Activated CD4-positive, alpha-beta T cell treated with anti-CD3 and anti-CD28 coated beads, Interleukin-2, amount 10 ng/mL, durations not matched to agents 24 days and 14 days (primary cell): ENCODE measurements at regions of chr7 and their contacts with region 1.

Region 1: GRCh38 chr7:54995631-54996340 is 23.0 kb upstream of the EGFR start:
- DNase-seq: peak; percentile 81
- H3K4me3 Mint-ChIP-seq: peak overlapping the region; percentile 27
- H3K27ac Mint-ChIP-seq: peak overlapping the region; percentile 73
- H3K4me1 Mint-ChIP-seq: peaks cover 30% of the 10 kb centered on the region
- H3K27me3 Mint-ChIP-seq: peaks cover 12% of the 10 kb centered on the region

Region 2: DNA sequence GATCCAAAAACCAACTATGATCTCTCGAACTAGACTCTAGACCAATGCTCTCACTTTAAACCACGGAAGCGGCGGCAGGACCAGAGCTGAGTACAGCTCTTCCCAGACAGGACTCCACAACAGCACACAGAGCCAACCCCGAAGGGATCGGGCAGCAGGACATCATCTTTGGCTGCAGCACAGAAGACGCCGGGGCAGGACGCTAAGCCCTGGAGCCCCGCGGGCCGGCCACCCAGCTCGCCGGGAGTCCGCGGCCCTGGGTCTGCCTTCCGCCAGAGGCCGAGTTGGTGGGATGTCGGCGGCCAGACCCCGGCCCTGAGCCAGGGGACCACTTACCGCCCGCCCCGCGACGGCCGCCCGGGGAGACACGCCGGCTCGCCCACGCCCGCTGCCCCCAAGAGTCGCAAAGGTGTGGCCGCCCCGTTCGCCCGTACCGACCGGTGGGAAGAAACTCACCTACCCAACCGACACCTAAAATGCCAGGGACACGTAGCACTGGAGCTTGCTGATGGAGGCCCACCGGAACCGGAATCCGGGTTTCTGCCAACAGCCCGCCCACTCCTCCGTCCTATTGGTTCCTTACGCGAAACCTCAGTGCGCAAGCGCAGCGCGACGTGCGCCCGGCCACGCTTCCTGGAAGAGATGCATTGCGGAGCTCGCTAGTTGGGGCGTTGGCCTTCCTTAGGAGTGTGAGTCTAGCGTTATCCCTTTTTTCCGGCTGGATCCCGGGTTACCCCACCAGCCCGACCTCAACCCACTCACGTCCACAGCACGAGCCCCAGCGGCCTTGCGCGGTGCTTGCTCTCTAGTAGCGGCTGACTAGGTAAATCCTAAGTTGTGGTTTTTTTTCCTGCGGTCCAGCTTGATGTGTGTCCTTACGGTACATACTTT is 236.8 kb before region 1 on chr7 and contains the start of gene SEC61G:
- intact Hi-C with region 1: loop called (anchors 5 kb)
- DNase-seq: peak; percentile 99
- H3K4me3 Mint-ChIP-seq: peak within 1 kb of the TSS; percentile 97
- H3K27ac Mint-ChIP-seq: peak within 1 kb of the TSS; percentile 99
- H3K4me1 Mint-ChIP-seq: peaks cover 27% of the 10 kb centered on the region
- H3K27me3 Mint-ChIP-seq: peaks cover 14% of the 10 kb centered on the region
- total RNA-seq, gene SEC61G: 170 and 176 TPM in 2 replicates

Region 3: DNA sequence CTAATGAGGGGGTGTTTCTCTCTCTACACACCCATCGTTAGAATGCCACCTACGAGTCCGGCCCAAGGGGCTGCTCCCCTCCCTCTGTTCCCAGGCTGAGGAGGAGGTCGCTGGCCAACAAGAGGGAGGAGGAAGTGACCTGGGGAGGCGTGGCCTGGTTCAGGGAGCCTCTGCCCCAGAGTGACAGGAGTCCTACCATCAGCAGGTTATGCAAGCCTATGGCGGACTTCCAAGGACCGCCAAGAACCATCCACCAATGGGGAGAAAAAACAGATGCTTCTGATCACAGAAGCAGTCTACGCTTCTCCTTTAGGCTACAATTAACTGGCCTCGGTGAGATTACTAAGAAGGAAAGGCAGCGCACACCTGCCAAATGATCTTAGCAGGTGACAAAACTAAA is 10.7 kb after region 1 on chr7:
- intact Hi-C with region 1: no loop called
- DNase-seq: no peak
- H3K4me3 Mint-ChIP-seq: no peak overlapping the region
- H3K27ac Mint-ChIP-seq: no peak overlapping the region
- H3K4me1 Mint-ChIP-seq: no peaks in the 10 kb centered on the region
- H3K27me3 Mint-ChIP-seq: peaks cover 26% of the 10 kb centered on the region

Region 4: GRCh38 chr7:55073945-55074499 is 78.2 kb after region 1 on chr7:
- intact Hi-C with region 1: loop called (anchors 2 kb)
- DNase-seq: peak; percentile 77
- H3K4me3 Mint-ChIP-seq: peak overlapping the region; percentile 59
- H3K27ac Mint-ChIP-seq: peak overlapping the region; percentile 64
- H3K4me1 Mint-ChIP-seq: peaks cover 15% of the 10 kb centered on the region
- H3K27me3 Mint-ChIP-seq: peaks cover 12% of the 10 kb centered on the region

Region 5: DNA sequence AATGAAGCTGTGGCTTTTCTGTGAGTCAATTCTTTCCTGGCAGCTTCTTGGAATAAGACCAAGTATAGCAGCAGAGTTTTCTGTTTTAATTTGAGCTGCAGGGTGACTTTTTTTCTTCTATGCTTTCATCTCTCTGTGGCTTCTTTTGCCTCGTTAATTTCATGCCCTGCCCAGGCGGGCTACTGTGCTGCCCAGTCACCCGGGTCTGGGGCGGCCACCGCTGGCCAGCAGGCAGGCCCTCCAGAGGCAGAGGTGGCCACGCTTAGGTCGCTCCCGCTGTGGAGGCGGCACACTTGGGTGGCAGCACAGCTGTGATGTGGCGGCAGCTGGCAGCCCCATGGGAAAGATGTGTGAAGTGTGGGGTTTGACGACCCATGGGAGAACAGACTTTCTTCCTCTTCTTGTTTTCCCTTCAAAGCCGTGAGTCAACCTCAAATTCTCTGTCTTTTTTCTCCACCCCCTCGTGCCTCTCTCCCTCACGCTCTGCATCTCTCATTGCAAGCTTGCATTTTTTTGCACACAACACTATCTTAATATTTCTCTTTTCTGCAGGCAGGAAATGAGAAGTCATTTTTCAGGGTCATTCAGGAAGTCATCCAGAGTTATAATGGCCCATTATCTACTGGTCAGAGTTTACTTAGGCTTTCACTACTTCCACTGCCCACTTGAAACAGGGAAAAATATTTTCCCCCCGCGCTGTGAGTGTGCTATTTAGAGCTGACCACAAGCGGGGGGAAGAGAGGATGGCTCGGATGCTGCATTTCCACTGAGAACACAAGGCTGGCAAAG is 90.8 kb after region 1 on chr7:
- intact Hi-C with region 1: loop called (anchors 1 kb)
- DNase-seq: peak; percentile 62
- H3K4me3 Mint-ChIP-seq: peak overlapping the region; percentile 66
- H3K27ac Mint-ChIP-seq: peak overlapping the region; percentile 62
- H3K4me1 Mint-ChIP-seq: peaks cover 17% of the 10 kb centered on the region
- H3K27me3 Mint-ChIP-seq: peaks cover 39% of the 10 kb centered on the region

Region 6: DNA sequence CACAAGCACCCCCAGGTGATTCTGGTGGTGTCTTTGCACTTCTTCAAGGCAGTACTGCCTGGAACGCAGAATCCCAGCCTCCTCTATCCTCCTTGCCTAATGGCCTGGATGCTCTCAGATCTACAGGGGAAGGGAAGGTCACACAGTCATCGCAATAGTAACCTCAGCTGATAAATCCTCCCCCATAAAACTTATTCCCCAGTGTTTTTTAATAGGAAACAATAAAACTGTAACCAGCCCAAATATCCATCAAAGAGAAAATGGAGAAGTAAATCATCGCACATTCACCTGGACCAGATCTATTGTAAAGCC is 101.4 kb after region 1 on chr7:
- intact Hi-C with region 1: no loop called
- DNase-seq: no peak
- H3K4me3 Mint-ChIP-seq: no peak overlapping the region
- H3K27ac Mint-ChIP-seq: no peak overlapping the region
- H3K4me1 Mint-ChIP-seq: no peaks in the 10 kb centered on the region
- H3K27me3 Mint-ChIP-seq: peaks cover 29% of the 10 kb centered on the region

Region 7: DNA sequence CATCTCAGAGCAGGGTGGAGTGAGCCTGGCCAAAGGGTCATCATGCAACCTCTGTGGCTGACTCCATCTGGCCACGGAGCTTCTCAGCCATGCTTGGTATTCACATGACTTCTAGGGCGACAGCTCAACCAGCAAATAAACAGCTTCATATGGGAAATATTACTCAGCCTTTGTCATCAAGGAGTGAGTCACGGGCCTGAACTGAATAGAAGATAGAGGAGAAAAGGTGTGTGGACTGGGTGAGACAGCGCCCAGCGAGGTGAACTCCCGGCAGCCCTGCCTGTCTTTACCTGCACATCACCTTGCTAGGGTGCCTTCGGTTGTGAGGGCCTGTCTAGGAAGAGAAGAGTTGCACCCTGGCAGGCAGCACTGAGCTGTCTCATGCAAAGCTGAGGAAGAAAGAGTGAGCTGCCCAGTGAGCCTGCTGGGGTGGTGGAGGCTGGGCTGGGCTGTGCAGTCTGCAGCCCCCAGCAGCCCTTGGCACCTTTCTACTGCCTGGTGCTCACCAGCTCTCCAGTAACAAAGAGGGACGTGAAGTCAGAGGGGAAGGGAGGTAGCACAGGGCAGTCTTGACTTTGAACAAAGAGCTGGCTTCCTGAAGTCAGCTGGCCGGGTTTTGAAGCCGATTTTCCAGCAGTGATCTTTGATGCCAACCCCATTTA is 137.2 kb after region 1 on chr7:
- intact Hi-C with region 1: loop called (anchors 2 kb)
- DNase-seq: peak; percentile 61
- H3K4me3 Mint-ChIP-seq: no peak overlapping the region
- H3K27ac Mint-ChIP-seq: peak overlapping the region; percentile 57
- H3K4me1 Mint-ChIP-seq: peaks cover 15% of the 10 kb centered on the region
- H3K27me3 Mint-ChIP-seq: peaks cover 9% of the 10 kb centered on the region

Region 8: GRCh38 chr7:55255496-55256435 is 260.0 kb after region 1 on chr7:
- intact Hi-C with region 1: loop called (anchors 2 kb)
- DNase-seq: peak; percentile 92
- H3K4me3 Mint-ChIP-seq: peak overlapping the region; percentile 90
- H3K27ac Mint-ChIP-seq: peak overlapping the region; percentile 58
- H3K4me1 Mint-ChIP-seq: peaks cover 8% of the 10 kb centered on the region
- H3K27me3 Mint-ChIP-seq: peaks cover 47% of the 10 kb centered on the region

Region 9: DNA sequence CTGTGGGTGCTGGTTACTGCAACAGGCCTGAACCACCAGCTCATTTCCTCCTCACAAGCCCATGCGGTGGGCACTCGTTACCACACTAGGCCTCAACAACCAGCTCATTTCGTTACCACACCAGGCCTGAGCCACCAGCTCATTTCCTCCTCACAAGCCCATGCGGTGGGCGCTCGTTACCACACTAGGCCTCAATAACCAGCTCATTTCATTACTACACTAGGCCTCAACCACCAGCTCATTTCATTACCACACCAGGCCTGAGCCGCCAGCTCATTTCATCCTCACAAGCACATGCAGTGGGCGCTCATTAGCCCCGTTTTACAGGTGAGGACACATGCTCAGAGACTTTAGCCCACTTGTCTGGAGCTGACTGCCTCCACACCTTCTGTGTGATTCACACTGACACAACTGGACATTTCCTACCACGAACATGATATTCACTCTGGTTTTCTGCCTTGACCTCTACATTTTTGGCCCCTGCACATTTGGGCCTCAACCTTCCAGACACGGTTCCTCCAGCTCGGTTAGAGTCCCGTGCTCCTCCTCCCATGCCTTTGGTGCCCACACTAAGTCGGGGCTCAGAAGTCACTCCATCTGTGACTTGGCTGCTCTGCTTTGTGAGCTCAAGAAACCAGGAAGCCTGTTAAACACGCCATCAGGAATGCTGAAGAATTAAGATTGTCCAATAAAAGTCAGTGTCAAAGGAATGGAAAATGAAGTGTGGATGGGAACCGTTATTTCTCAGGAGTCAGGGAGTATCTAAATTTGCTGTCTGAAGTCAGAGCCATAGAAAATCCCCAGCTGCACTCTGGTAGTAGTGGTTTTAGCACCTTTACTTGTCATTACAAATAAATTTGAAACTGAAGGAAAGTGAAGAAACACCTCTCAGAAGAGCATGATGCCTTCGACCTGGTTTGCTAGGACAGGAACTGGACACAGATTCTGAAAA is 313.5 kb after region 1 on chr7:
- intact Hi-C with region 1: loop called (anchors 1 kb)
- DNase-seq: peak; percentile 82
- H3K4me3 Mint-ChIP-seq: peak overlapping the region; percentile 41
- H3K27ac Mint-ChIP-seq: peak overlapping the region; percentile 87
- H3K4me1 Mint-ChIP-seq: peaks cover 27% of the 10 kb centered on the region
- H3K27me3 Mint-ChIP-seq: peaks cover 4% of the 10 kb centered on the region

Region 10: DNA sequence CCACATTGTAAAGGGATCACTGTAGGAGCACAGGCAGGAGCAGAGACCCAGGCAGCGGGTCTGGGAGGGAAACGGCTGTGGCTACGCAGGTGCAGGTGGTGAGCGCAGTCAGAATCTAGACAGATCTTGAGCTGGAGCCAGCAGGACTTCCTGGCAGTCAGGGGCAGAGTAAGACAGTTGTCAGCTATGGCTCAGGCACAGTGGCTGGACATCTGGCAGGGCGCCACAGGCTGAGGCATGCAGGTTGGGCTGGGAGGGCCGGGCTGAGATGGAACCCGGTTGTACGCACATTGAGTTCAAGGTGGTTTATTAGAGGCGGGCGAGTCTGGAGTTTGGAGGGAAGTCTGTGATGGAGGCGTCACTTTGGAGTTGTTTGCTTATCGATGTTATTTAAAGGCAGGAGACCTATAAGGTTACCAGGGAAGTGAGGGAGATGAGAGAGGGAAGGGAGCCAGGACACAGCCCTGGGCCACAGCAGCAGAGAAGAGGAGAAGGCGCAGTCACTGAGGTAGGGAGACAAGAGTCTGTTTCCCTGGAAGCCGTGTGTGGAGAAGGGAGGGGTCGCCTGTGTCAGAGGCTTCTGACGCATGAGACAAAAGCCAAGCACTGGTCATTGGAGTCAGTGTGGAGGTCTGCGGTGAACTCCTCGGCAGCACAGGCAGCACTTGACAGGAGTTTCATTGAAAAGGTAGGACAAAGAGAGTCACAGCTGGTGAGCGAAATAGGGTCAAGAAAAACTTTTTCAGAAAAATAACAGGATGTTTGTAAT is 443.2 kb after region 1 on chr7:
- intact Hi-C with region 1: no loop called
- DNase-seq: no peak
- H3K4me3 Mint-ChIP-seq: no peak overlapping the region
- H3K27ac Mint-ChIP-seq: no peak overlapping the region
- H3K4me1 Mint-ChIP-seq: peaks cover 17% of the 10 kb centered on the region
- H3K27me3 Mint-ChIP-seq: no peaks in the 10 kb centered on the region